ENCODE measurements at regions of chr2 and their contacts with region 1.

Region 1: GRCh38 chr2:72745679-72746368 is 80.0 kb downstream of the EXOC6B start:
- DNase-seq: no peak
- H3K4me3 Mint-ChIP-seq: no peak overlapping the region
- H3K27ac Mint-ChIP-seq: no peak overlapping the region
- H3K4me1 Mint-ChIP-seq: no peaks in the 10 kb centered on the region
- H3K27me3 Mint-ChIP-seq: no peaks in the 10 kb centered on the region

Region 2: GRCh38 chr2:71923887-71924533 is 821.8 kb before region 1 on chr2:
- intact Hi-C with region 1: loop called (anchors 1 kb)
- DNase-seq: peak; percentile 17
- H3K4me3 Mint-ChIP-seq: no peak overlapping the region
- H3K27ac Mint-ChIP-seq: no peak overlapping the region
- H3K4me1 Mint-ChIP-seq: no peaks in the 10 kb centered on the region
- H3K27me3 Mint-ChIP-seq: no peaks in the 10 kb centered on the region

Region 3: DNA sequence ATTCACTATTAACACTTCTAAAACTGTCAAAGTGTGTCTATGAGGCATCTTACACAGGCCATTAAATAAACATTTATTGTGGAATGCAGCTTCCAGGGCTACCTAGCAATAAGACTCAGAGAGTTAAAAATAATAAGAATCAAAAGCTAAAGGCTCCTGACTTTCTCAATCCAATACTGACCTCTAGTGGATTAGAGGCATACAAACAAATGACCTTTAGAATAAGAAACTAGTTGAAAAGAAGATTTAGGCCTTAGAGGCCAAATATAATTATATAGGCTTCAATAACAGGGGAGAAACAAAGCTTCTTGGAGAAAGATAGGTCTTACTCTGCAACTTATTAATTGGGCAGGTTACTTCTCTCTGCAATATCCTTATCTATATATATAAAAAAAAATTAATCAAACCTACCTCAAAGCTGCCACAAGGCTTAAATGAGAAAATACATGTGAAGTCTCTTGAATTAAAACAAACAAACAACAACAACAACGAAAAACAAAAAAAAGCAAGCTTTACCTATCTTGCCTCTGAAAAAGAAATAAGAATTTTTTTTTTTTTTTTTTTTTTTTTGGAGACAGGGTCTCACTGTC is 166.1 kb before region 1 on chr2:
- intact Hi-C with region 1: loop called (anchors 1 kb)
- DNase-seq: no peak
- H3K4me3 Mint-ChIP-seq: no peak overlapping the region
- H3K27ac Mint-ChIP-seq: no peak overlapping the region
- H3K4me1 Mint-ChIP-seq: no peaks in the 10 kb centered on the region
- H3K27me3 Mint-ChIP-seq: no peaks in the 10 kb centered on the region

Region 4: GRCh38 chr2:72813841-72814240 is 68.0 kb after region 1 on chr2:
- intact Hi-C with region 1: no loop called
- DNase-seq: no peak
- H3K4me3 Mint-ChIP-seq: no peak overlapping the region
- H3K27ac Mint-ChIP-seq: no peak overlapping the region
- H3K4me1 Mint-ChIP-seq: no peaks in the 10 kb centered on the region
- H3K27me3 Mint-ChIP-seq: no peaks in the 10 kb centered on the region